ENCODE measurements at regions of chr7 and their contacts with region 1.

Region 1: DNA sequence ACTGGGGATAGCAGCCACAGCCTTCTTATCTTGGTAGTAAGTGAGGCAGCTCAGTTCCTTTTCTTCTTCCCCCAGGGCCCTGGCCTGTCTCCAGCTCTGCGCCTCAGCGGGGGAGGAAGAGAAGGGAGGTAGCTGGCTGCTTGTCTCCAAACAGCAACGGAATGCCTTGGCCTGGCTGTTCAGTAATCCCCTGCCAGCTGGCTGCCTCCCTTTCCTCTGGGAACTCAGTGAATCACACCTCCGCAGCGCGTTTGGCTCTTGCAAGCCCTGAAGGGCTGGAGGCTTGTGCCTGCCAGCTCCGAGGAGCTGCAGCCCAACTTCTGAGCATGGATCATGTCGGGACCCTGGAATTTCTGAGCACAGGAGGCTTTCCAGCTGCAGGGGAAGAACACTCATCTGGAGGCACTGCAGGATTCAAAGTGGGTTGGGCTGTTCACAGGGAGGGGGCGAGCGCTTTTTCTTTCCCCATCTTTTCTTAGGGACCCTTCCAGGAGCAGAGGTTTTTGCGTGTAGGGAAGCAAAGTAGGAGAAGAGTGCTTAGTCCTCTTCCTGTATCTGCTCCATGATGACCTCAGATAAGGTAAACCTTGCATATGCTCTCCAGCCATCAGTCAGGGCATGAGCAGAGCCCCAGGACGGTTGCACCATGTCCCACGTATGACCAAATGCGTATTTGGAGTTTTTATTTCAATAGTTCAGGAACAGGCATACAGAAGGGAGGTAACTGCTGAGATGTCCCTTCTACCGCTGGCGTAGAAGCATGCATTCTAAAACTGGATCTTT is 253.2 kb upstream of the INHBA start:
- H3K4me3 Mint-ChIP-seq: no peak overlapping the region
- H3K27ac Mint-ChIP-seq: no peak overlapping the region
- H3K4me1 Mint-ChIP-seq: peaks cover 19% of the 10 kb centered on the region
- H3K27me3 Mint-ChIP-seq: peaks cover 12% of the 10 kb centered on the region

Region 2: DNA sequence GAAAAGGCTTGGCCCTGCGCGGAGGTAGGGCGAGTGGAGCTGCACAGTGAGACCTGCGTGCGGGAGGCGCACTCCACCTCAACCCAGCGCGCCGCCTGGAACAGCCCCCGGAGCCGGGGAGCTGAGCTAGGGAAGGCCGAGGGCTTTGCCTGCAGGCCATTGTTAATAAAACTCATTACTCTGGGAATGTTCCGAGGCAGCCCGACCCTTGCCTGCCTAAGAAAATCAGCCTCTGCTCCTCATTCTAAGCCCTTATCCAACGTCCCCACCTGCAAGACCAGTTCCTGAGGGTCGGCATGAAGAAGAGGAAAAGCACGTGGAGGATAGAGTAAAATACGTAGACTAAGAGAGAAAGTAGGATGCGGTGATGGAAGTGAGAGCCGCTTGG is 900.5 kb after region 1 on chr7:
- intact Hi-C with region 1: loop called (anchors 10 kb)
- H3K4me3 Mint-ChIP-seq: no peak overlapping the region
- H3K27ac Mint-ChIP-seq: no peak overlapping the region
- H3K4me1 Mint-ChIP-seq: peaks cover 9% of the 10 kb centered on the region
- H3K27me3 Mint-ChIP-seq: peaks cover 52% of the 10 kb centered on the region